Aorta (tissue), 5 donors: ENCODE measurements at regions of chr1 and their contacts with region 1.

Region 1: DNA sequence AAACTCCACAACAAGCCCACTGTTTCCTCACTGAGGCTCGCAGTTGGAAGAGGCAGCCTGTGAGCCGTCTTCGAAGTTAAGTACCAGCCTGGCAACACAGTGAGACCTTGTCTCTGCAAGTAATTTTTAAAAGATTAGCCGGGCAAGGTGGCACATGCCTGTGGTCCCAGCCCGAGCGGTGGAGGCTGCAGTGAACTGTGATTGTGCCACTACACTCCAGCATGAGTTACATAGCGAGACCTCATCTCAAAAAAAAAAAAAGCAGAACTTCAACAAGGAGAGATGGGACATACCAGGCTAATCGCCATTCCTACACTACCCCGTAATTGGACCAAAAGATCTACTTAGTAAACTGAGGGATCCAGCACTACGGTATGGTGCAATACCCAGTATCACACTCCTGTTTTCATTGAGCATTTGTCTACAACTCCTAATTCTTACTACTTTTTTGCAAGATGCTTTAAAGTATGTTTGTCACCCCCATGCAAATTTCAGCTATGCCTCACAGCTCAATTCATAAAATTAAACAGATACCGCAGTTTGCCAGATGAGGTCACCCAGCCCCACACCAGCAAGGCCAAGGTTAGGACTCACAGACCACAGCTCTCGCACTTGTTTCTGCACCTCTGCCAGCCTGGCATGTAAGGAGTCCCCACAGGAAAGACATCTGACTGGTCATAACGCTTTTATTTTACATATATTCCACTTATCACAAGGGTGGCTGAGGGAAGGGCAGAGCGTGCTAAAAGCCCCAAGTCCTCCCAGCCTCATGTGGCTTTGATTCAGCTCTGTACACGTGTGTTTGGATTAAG is 21.0 kb downstream of the SDE2 start:
- DNase-seq: no peak
- ATAC-seq: no peak
- H3K4me3 ChIP-seq: no peak overlapping the region
- H3K27ac ChIP-seq: no peak overlapping the region
- H3K4me1 ChIP-seq: no peaks in the 10 kb centered on the region
- H3K27me3 ChIP-seq: no peaks in the 10 kb centered on the region

Region 2: GRCh38 chr1:225318706-225319575 is 659.2 kb before region 1 on chr1:
- intact Hi-C with region 1: loop called (anchors 5 to 10 kb)
- DNase-seq: no peak
- ATAC-seq: no peak
- H3K4me3 ChIP-seq: no peak overlapping the region
- H3K27ac ChIP-seq: no peak overlapping the region
- H3K4me1 ChIP-seq: no peaks in the 10 kb centered on the region
- H3K27me3 ChIP-seq: no peaks in the 10 kb centered on the region

Region 3: DNA sequence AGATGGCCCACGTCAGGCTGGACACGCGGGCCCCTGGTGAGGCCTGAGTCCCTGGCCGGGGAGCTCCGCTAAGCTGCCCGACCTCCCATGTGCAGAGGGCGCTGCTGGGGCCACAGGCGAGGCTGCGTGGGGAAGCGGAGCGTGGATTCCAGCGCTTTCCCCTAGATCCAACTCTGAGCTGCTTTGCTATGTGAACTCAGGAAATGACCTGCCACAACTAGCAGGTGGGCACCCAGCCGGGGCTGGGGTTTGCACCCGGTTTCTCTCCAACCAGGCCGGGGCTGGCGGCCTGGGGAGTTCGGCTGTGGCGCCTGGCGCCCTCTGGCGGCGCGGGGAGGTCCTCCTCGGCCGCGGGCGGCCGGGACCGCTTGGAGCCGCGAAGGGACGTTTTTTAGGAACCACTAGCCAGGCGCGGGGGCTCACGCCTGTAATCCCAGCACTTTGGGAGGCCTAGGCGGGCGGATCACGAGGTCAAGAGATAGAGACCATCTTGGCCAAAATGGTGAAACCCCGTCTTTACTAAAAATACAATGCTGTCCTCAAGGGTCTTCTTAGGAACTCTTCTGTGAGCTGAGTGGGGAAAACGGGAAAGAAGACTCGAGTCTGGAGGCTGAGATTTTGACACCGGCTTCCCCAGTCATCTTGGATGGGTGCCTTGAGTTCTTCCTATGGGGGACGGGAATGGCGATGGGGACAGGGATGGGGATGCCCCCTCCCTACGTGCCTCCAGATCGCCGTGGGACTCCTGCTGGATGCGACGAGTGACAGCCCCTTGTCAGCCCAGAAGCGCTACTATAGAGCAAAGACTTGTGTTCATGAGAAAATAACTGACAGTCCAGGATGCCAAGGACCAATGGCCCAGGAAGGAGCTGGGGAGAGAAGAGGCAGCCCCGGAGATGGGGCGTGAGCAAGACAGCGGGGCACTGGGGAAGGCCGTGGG is 66.7 kb before region 1 on chr1:
- intact Hi-C with region 1: loop called in 1 of 2 experiments (anchors 5 kb)
- DNase-seq: peak; percentile 72 to 92
- ATAC-seq: peak; percentile 90
- H3K4me3 ChIP-seq: no peak overlapping the region
- H3K27ac ChIP-seq: no peak overlapping the region
- H3K4me1 ChIP-seq: no peaks in the 10 kb centered on the region
- H3K27me3 ChIP-seq: no peaks in the 10 kb centered on the region